ENCODE measurements at regions of chr12 and their contacts with region 1.

Region 1: GRCh38 chr12:32455607-32456071 is 56.3 kb downstream of the FGD4 start:
- DNase-seq: peak; percentile 76
- H3K4me3 Mint-ChIP-seq: no peak overlapping the region
- H3K27ac Mint-ChIP-seq: no peak overlapping the region
- H3K4me1 Mint-ChIP-seq: no peaks in the 10 kb centered on the region
- H3K27me3 Mint-ChIP-seq: peaks cover 7% of the 10 kb centered on the region

Region 2: DNA sequence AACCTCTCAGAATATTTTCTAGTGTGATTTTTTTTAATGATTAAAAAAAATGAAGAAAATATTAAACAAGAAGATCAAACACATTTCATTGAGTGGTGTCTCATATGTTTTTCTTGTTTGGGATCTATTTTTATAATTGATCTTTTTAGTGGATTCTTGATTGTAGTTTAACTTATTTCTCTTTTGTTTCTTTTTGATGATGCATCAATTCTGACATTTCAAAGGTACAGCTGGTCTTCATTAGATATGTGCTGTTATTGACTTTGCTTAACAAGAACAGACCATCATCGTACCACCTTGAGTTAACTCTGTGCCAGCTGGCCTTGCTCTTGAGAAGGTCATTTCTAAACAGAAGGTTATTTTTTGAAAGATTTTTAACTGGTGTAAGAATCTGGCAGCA is 102.1 kb before region 1 on chr12:
- intact Hi-C with region 1: no loop called
- DNase-seq: no peak
- H3K4me3 Mint-ChIP-seq: no peak overlapping the region
- H3K27ac Mint-ChIP-seq: no peak overlapping the region
- H3K4me1 Mint-ChIP-seq: no peaks in the 10 kb centered on the region
- H3K27me3 Mint-ChIP-seq: no peaks in the 10 kb centered on the region

Region 3: GRCh38 chr12:32365473-32366064 is 90.1 kb before region 1 on chr12:
- intact Hi-C with region 1: loop called (anchors 5 kb)
- DNase-seq: peak; percentile 81
- H3K4me3 Mint-ChIP-seq: no peak overlapping the region
- H3K27ac Mint-ChIP-seq: no peak overlapping the region
- H3K4me1 Mint-ChIP-seq: no peaks in the 10 kb centered on the region
- H3K27me3 Mint-ChIP-seq: no peaks in the 10 kb centered on the region

Region 4: GRCh38 chr12:32659908-32660440 is 204.3 kb after region 1 on chr12:
- intact Hi-C with region 1: loop called (anchors 1 kb)
- DNase-seq: no peak
- H3K4me3 Mint-ChIP-seq: no peak overlapping the region
- H3K27ac Mint-ChIP-seq: no peak overlapping the region
- H3K4me1 Mint-ChIP-seq: peaks cover 11% of the 10 kb centered on the region
- H3K27me3 Mint-ChIP-seq: no peaks in the 10 kb centered on the region

Region 5: GRCh38 chr12:32671930-32672780 is 216.5 kb after region 1 on chr12:
- intact Hi-C with region 1: loop called (anchors 1 kb)
- DNase-seq: peak; percentile 79
- H3K4me3 Mint-ChIP-seq: no peak overlapping the region
- H3K27ac Mint-ChIP-seq: no peak overlapping the region
- H3K4me1 Mint-ChIP-seq: no peaks in the 10 kb centered on the region
- H3K27me3 Mint-ChIP-seq: peaks cover 6% of the 10 kb centered on the region

Measured in activated CD4-positive, alpha-beta T cell treated with anti-CD3 and anti-CD28 coated beads, Interleukin-2, amount 10 ng/mL, durations not matched to agents 24 days and 14 days (primary cell).